ENCODE measurements at regions of chr10 and their contacts with region 1.

Region 1: GRCh38 chr10:31864834-31865518 is 63.7 kb downstream of the ARHGAP12 start:
- DNase-seq: no peak
- H3K4me3 ChIP-seq: no peak overlapping the region
- H3K27me3 ChIP-seq: no peaks in the 10 kb centered on the region
- CTCF ChIP-seq: no peak

Region 2: DNA sequence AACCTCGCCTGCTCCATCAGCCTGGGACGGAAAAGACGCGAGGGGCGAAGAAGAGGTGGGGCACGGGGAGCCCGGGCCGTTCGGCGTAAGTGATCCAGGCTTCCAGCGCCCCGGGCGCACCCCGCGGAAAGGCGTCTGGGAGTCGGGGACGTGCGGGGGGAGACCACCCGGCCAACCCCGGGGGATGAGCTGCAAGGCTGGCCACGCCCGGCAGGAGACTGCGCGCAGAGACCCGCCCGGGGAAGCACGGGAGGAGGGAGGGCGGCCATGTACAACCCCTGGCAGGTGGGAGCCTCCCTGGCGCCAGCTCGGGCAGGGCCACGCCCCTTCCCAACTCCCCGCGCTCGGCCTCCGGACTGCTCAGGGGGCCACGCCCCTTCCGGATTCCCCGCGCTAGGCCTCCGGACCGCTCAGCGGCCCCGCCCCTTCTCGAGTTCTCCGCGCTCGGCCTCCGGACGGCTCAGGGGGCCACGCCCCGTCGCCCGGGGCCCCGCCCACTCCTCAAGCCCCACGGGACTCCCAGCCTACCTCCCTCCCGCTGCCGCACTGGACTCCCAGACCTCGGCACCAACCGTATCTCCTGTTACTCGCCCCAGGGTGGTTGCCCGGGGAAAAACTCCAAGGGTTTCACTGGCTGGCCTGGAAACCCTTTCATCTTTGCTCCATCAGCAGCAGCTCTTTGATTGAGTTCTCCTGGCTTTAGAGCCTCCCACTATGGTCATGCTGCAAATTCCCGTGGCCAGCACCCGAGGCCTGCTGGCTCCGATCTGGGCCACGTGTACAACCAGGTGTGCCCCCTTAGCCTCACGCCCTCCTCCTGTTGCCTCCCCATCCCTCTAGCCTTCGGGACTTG is 261.5 kb before region 1 on chr10:
- CTCF ChIA-PET with region 1: no interaction called
- POLR2A ChIA-PET with region 1: no interaction called
- DNase-seq: peak; percentile 73
- H3K4me3 ChIP-seq: peak overlapping the region; percentile 55
- H3K27me3 ChIP-seq: no peaks in the 10 kb centered on the region
- CTCF ChIP-seq: 0 out of 2 replicates have a peak, but pooled peaks have one; percentile 6

Region 3: GRCh38 chr10:31851216-31851615 is 13.8 kb before region 1 on chr10:
- CTCF ChIA-PET with region 1: interaction called, 12 read pairs
- POLR2A ChIA-PET with region 1: no interaction called
- DNase-seq: no peak
- H3K4me3 ChIP-seq: no peak overlapping the region
- H3K27me3 ChIP-seq: no peaks in the 10 kb centered on the region
- CTCF ChIP-seq: no peak

Region 4: GRCh38 chr10:31896947-31897384 is 32.0 kb after region 1 on chr10:
- CTCF ChIA-PET with region 1: no interaction called
- POLR2A ChIA-PET with region 1: interaction called, 10 read pairs
- DNase-seq: peak; percentile 56
- H3K4me3 ChIP-seq: no peak overlapping the region
- H3K27me3 ChIP-seq: no peaks in the 10 kb centered on the region
- CTCF ChIP-seq: no peak

Region 5: DNA sequence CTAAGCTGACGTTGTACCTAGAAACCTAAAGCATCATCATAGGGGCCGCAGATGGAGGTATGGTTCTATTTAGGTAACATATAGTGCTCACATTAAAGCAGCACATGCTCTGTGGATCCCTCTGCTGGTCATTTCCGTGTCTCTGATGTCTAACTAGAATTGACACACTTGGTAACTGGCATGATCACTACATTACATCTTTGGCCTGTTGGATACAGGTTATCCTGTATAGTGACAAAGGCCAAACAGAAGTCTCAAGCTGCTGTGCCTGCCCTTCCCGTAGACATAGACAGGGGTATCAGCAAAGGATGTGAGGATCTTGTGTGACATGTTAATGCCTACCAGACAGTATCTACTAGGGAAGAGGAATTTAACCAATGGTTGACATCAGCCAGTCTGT is 140.1 kb after region 1 on chr10:
- CTCF ChIA-PET with region 1: interaction called, 25 read pairs
- POLR2A ChIA-PET with region 1: no interaction called
- DNase-seq: no peak
- H3K4me3 ChIP-seq: no peak overlapping the region
- H3K27me3 ChIP-seq: no peaks in the 10 kb centered on the region
- CTCF ChIP-seq: peak; percentile 59

Region 6: DNA sequence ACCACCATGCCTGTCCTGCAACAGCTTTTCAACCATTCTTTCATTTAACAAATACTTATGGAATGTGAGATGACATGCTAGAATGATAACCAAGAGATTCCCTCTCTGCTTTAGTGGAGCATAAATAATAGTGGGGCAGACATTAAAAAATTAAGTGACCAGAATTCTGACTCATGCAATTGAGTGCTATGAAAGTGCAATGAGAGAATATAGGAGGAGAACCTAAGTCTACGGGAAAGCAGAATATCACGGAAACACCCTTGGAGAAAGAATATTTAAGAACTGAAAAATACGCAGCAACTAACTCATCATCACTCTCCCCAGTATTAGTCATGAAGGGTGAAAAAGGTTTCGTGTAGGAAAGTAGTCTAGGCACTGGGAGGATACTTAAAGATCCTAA is 184.1 kb after region 1 on chr10:
- CTCF ChIA-PET with region 1: no interaction called
- POLR2A ChIA-PET with region 1: no interaction called
- DNase-seq: no peak
- H3K4me3 ChIP-seq: no peak overlapping the region
- H3K27me3 ChIP-seq: no peaks in the 10 kb centered on the region
- CTCF ChIP-seq: no peak